GM13977 (cell line): ENCODE measurements at regions of chr2 and their contacts with region 1.

Region 1: GRCh38 chr2:169109502-169110409 is 40.4 kb downstream of the DHRS9 start:
- DNase-seq: peak; percentile 54
- CTCF ChIP-seq: peak; percentile 89

Region 2: DNA sequence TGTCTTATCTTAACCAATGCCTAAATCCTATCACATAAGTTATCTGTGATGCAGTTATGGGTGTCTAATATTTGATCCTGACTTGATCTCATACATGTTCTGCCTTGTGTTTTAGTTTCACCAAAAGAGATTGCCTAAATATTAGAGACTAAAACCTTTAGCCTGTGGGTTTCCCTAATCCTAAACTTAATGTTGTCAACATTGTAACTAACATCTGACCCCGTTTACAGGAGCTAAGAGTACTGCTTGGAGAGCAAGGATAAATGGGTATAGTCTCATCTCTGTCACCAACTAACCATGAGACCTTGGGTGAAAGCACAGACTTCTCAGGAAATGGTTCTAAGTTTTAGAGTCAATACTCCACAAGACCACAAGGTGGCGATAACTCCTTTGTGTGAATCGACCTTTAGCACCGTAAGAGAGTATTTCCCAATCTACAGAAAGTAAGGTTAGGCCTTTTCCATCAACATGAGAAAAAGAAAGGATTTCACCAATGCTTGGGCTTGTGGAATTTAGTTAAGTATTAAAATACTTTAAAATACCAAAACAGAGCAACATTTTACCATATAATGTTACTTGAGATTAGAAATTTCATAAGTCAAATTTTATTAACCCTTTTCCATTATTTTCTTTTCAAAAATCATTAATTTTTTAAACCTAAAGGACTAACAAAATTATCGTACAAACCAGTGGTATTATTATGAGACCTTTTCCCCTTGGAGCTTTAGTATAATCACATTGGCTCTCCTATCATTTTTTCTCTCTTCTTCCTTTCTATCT is 148.1 kb before region 1 on chr2:
- in situ Hi-C with region 1: loop called (anchors 25 kb)
- DNase-seq: peak; percentile 21
- CTCF ChIP-seq: peak; percentile 77

Region 3: GRCh38 chr2:169038338-169038757 is 71.4 kb before region 1 on chr2:
- in situ Hi-C with region 1: loop called (anchors 10 kb)
- DNase-seq: peak; percentile 12
- CTCF ChIP-seq: no peak